Endothelial cell of umbilical vein (primary cell): ENCODE measurements at regions of chr15 and their contacts with region 1.

Region 1: GRCh38 chr15:57751177-57751800 is 44.8 kb downstream of the POLR2M start:
- DNase-seq: peak; percentile 72
- H3K4me3 ChIP-seq: no peak overlapping the region
- H3K27ac ChIP-seq: no peak overlapping the region
- H3K4me1 ChIP-seq: no peaks in the 10 kb centered on the region
- H3K27me3 ChIP-seq: no peaks in the 10 kb centered on the region
- CTCF ChIP-seq: peak; percentile 53 to 67
- POLR2A ChIP-seq: no peak

Region 2: GRCh38 chr15:57527382-57528091 is 223.8 kb before region 1 on chr15:
- CTCF ChIA-PET with region 1: no interaction called
- POLR2A ChIA-PET with region 1: no interaction called
- dilution Hi-C with region 1: no loop called
- intact Hi-C with region 1: no loop called
- DNase-seq: peak; percentile 86
- H3K4me3 ChIP-seq: no peak overlapping the region
- H3K27ac ChIP-seq: no peak overlapping the region
- H3K4me1 ChIP-seq: peaks cover 35% of the 10 kb centered on the region
- H3K27me3 ChIP-seq: no peaks in the 10 kb centered on the region
- CTCF ChIP-seq: peak; percentile 41
- POLR2A ChIP-seq: no peak

Region 3: GRCh38 chr15:57607570-57608000 is 143.7 kb before region 1 on chr15:
- CTCF ChIA-PET with region 1: no interaction called
- POLR2A ChIA-PET with region 1: no interaction called
- dilution Hi-C with region 1: no loop called
- intact Hi-C with region 1: no loop called
- DNase-seq: peak; percentile 33
- H3K4me3 ChIP-seq: no peak overlapping the region
- H3K27ac ChIP-seq: no peak overlapping the region
- H3K4me1 ChIP-seq: peaks cover 25% of the 10 kb centered on the region
- H3K27me3 ChIP-seq: no peaks in the 10 kb centered on the region
- CTCF ChIP-seq: no peak
- POLR2A ChIP-seq: no peak

Region 4: GRCh38 chr15:57732526-57733331 is 18.6 kb before region 1 on chr15:
- CTCF ChIA-PET with region 1: interaction called, 77 read pairs
- POLR2A ChIA-PET with region 1: no interaction called
- dilution Hi-C with region 1: no loop called
- intact Hi-C with region 1: no loop called
- DNase-seq: peak; percentile 79
- H3K4me3 ChIP-seq: peak overlapping the region in 1 of 3 experiments; percentile 15
- H3K27ac ChIP-seq: no peak overlapping the region
- H3K4me1 ChIP-seq: peaks cover 10% of the 10 kb centered on the region
- H3K27me3 ChIP-seq: no peaks in the 10 kb centered on the region
- CTCF ChIP-seq: peak; percentile 78 to 89
- POLR2A ChIP-seq: no peak

Region 5: GRCh38 chr15:57769266-57769665 is 18.0 kb after region 1 on chr15:
- CTCF ChIA-PET with region 1: interaction called, 19 read pairs
- POLR2A ChIA-PET with region 1: no interaction called
- dilution Hi-C with region 1: no loop called
- intact Hi-C with region 1: no loop called
- DNase-seq: peak; percentile 10
- H3K4me3 ChIP-seq: no peak overlapping the region
- H3K27ac ChIP-seq: no peak overlapping the region
- H3K4me1 ChIP-seq: no peaks in the 10 kb centered on the region
- H3K27me3 ChIP-seq: no peaks in the 10 kb centered on the region
- CTCF ChIP-seq: no peak
- POLR2A ChIP-seq: no peak

Region 6: GRCh38 chr15:57923306-57923705 is 172.0 kb after region 1 on chr15:
- CTCF ChIA-PET with region 1: interaction called, 12 read pairs
- POLR2A ChIA-PET with region 1: no interaction called
- dilution Hi-C with region 1: no loop called
- intact Hi-C with region 1: no loop called
- DNase-seq: peak; percentile 90
- H3K4me3 ChIP-seq: peak overlapping the region in 1 of 3 experiments; percentile 39
- H3K27ac ChIP-seq: peak overlapping the region; percentile 63
- H3K4me1 ChIP-seq: peaks cover 39% of the 10 kb centered on the region
- H3K27me3 ChIP-seq: no peaks in the 10 kb centered on the region
- CTCF ChIP-seq: no peak
- POLR2A ChIP-seq: no peak

Region 7: GRCh38 chr15:58077427-58077826 is 326.1 kb after region 1 on chr15:
- CTCF ChIA-PET with region 1: interaction called, 636 read pairs
- POLR2A ChIA-PET with region 1: no interaction called
- dilution Hi-C with region 1: no loop called
- intact Hi-C with region 1: no loop called
- DNase-seq: peak; percentile 35
- H3K4me3 ChIP-seq: no peak overlapping the region
- H3K27ac ChIP-seq: no peak overlapping the region
- H3K4me1 ChIP-seq: no peaks in the 10 kb centered on the region
- H3K27me3 ChIP-seq: no peaks in the 10 kb centered on the region
- CTCF ChIP-seq: peak in 1 of 2 donors; percentile 33
- POLR2A ChIP-seq: no peak